Activated naive CD4-positive, alpha-beta T cell treated with anti-CD3 and anti-CD28 coated beads, Interleukin-2, amount 10 ng/mL, durations not matched to agents 7 days and 5 days (primary cell): ENCODE measurements at regions of chr6 and their contacts with region 1.

Region 1: GRCh38 chr6:37516076-37516919 is 16.6 kb upstream of the CCDC167 start:
- DNase-seq: peak; percentile 95
- H3K4me3 Mint-ChIP-seq: peak overlapping the region; percentile 82
- H3K27ac Mint-ChIP-seq: peak overlapping the region; percentile 98
- H3K4me1 Mint-ChIP-seq: peaks cover 73% of the 10 kb centered on the region
- H3K27me3 Mint-ChIP-seq: peaks cover 10% of the 10 kb centered on the region

Region 2: DNA sequence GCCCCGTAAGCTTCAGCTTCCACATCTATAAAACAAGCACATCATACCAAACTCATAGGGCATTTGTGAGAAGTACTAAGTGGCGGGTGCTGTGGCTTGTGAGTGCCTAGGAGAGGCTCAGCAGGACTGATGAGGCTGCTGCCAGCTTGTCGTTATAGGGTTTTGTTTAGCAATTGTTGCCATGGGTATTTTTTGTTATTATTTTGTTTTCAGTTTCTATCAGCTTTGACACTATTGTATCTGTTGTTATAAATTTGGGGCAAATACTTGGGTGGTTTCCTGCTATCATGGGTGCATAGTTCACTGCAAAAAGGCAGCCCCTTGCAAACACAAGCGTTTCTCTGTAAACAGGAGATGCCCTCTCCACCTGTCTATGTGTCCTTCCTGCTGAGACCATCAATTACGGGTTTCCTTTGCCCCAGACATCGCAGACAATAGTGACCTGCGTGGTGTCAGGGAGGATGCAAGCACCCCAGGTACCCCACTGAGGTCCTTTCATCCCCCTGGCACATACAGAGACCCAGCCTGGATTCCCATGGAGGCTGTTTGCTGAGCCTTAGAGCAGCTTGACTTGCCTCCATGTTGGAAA is 13.5 kb before region 1 on chr6:
- CTCF ChIA-PET with region 1: interaction called, 34 read pairs
- DNase-seq: peak; percentile 61
- H3K4me3 Mint-ChIP-seq: no peak overlapping the region
- H3K27ac Mint-ChIP-seq: peak overlapping the region; percentile 91
- H3K4me1 Mint-ChIP-seq: peaks cover 64% of the 10 kb centered on the region
- H3K27me3 Mint-ChIP-seq: no peaks in the 10 kb centered on the region

Region 3: DNA sequence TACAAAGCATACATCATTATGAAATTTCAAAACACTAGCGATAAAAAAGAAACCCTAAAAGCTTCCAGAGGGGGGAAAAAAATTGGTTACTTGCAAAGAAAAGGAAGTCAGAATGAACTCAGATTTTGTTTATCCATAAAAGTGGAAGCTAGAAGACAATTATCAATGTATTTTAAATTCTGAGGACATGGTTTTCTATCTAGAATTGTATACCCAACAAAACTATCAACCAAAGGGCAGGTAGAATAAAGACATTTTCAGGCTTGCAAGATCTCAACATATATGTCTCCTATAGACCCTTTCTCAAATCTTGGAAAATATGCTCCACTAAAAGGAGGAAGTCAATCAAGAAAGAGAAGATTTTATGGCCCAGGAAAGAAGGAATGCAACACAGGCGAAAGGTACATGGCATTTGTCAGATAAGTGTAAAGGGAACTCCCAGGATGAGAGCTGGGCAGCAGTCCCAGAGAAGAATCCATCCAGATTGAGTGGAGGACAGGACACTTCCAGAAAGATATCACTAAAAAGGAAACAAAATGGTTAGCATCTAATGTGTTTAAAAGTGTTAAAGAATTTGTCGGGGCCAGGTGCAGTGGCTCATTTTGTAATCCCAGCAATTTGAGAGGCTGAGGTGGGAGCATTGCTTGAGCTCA is 257.9 kb after region 1 on chr6:
- CTCF ChIA-PET with region 1: no interaction called
- DNase-seq: no peak
- H3K4me3 Mint-ChIP-seq: no peak overlapping the region
- H3K27ac Mint-ChIP-seq: no peak overlapping the region
- H3K4me1 Mint-ChIP-seq: no peaks in the 10 kb centered on the region
- H3K27me3 Mint-ChIP-seq: peaks cover 30% of the 10 kb centered on the region

Region 4: DNA sequence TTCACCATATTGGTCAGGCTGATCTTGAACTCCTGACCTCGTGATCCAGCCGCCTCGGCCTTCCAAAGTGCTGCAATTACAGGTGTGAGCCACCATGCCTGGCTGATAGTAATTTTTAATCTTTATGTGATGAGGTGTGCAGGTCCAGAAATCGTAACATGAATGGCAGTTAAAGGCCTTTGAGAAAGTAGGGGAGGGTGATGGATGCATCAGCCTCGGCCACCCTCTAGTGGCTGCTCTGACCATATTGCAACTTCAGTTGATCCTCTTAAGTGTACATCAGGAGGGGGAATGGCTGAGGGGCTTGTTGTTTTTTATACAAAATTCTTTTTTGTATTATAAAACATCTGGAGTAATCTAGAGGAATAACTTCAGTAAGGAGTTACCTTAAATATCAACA is 496.3 kb after region 1 on chr6:
- CTCF ChIA-PET with region 1: no interaction called
- DNase-seq: peak; percentile 24
- H3K4me3 Mint-ChIP-seq: no peak overlapping the region
- H3K27ac Mint-ChIP-seq: no peak overlapping the region
- H3K4me1 Mint-ChIP-seq: no peaks in the 10 kb centered on the region
- H3K27me3 Mint-ChIP-seq: no peaks in the 10 kb centered on the region